ENCODE measurements at regions of chr21 and their contacts with region 1.

Region 1: DNA sequence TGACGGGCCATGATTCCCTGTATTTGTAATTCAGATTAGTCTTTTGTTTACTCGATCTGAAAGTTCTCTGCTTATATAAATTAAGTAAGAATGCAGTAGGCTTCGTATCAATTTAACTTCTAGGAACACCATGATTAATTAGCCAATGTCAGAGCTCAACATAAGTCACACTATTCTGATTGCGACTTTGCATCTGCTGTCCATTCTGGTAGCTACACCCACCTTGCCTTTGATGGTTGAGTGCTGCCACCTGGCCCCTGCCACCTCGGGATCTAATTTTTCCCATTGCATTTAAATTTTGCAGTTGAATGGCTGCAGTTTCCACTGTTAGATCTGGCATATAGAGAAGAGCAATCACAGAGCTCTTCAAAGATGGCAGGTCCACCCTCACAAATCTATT is 140.0 kb downstream of the LTN1 start:
- DNase-seq: no peak
- H3K4me3 ChIP-seq: no peak overlapping the region
- H3K27ac ChIP-seq: no peak overlapping the region
- H3K4me1 ChIP-seq: no peaks in the 10 kb centered on the region
- H3K27me3 ChIP-seq: no peaks in the 10 kb centered on the region
- CTCF ChIP-seq: no peak
- POLR2A ChIP-seq: no peak

Region 2: GRCh38 chr21:27498025-27498424 is 1354.7 kb before region 1 on chr21:
- intact Hi-C with region 1: loop called (anchors 5 kb)
- DNase-seq: no peak
- H3K4me3 ChIP-seq: no peak overlapping the region
- H3K27ac ChIP-seq: no peak overlapping the region
- H3K4me1 ChIP-seq: no peaks in the 10 kb centered on the region
- H3K27me3 ChIP-seq: no peaks in the 10 kb centered on the region
- CTCF ChIP-seq: no peak
- POLR2A ChIP-seq: no peak

Region 3: DNA sequence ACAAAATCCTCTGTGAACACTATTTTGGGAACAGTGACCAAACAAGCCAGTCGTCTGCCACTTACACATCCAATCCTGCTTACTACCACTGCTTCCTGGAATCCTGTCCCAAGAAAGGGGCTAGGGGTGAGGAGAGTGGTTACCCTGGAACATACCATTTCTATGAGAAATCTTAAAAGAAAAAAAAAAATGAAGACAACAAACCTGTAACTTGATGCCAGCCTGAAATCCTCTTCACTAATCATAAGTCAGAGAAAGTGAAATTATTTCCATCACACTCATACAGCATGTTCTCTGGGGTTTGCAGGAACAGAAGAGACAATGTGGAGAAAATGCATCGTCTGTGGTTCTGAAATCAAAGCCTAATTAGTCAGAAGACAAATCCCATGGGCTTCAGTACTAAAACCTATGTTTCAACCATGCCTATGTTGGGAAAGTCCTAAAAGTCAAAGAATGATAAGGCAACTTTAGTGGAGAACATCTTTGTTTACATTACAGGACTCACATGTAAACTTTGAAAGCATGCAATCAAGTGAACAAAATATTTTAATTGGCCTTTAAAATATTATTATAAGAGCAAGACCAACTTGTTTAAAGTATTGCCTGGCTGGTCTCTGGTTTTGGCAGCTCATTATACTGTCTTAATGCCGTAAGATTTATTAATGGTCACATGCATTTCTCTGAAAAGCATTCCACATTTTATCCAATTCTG is 80.8 kb before region 1 on chr21:
- intact Hi-C with region 1: no loop called
- DNase-seq: no peak
- H3K4me3 ChIP-seq: no peak overlapping the region
- H3K27ac ChIP-seq: no peak overlapping the region
- H3K4me1 ChIP-seq: no peaks in the 10 kb centered on the region
- H3K27me3 ChIP-seq: no peaks in the 10 kb centered on the region
- CTCF ChIP-seq: no peak
- POLR2A ChIP-seq: no peak

Region 4: DNA sequence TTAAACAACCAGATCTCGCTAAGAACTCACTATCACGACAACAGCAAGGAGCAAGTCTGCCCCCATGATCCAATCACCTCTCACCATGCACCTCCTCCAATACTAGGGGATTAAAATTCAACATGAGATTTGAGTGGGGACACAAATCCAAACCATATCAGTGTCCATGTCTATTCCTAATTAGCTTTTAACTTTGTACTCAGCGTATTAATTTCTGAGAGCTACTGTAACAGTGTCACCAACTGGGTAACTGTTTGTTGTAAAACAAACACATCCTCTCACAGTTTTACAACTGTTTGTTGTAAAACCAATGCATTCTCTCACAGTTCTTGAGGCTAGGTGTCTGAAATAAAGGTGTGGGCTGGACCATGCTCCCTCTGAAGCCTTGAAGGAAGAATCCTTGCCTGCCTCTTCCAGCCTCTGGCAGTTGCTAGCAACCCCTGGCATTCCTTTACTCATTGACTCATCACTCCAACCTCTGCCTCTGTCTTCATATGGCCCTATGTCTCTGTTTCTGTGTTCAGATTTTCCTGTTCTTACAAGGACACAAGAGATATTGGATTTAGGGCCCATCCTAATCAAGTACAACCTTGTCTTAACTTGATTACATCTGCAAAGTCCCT is 18.8 kb after region 1 on chr21:
- intact Hi-C with region 1: no loop called
- DNase-seq: no peak
- H3K4me3 ChIP-seq: no peak overlapping the region
- H3K27ac ChIP-seq: no peak overlapping the region
- H3K4me1 ChIP-seq: no peaks in the 10 kb centered on the region
- H3K27me3 ChIP-seq: no peaks in the 10 kb centered on the region
- CTCF ChIP-seq: no peak
- POLR2A ChIP-seq: no peak